ENCODE measurements at regions of chr7 and their contacts with region 1.

Region 1: GRCh38 chr7:39465055-39465929 is 100.9 kb upstream of the YAE1 start:
- DNase-seq: peak; percentile 53 to 64
- H3K4me3 ChIP-seq: no peak overlapping the region
- H3K4me3 Mint-ChIP-seq: peak overlapping the region; percentile 49
- H3K27ac Mint-ChIP-seq: peak overlapping the region; percentile 36
- H3K4me1 ChIP-seq: peaks cover 4% of the 10 kb centered on the region; the same call in 1 of the 2 replicates
- H3K4me1 Mint-ChIP-seq: peaks cover 9% of the 10 kb centered on the region
- H3K27me3 ChIP-seq: no peaks in the 10 kb centered on the region
- H3K27me3 Mint-ChIP-seq: peaks cover 7% of the 10 kb centered on the region
- CTCF ChIP-seq: peak; percentile 78 to 79

Region 2: GRCh38 chr7:39313974-39314373 is 151.3 kb before region 1 on chr7:
- CTCF ChIA-PET with region 1: no interaction called
- POLR2A ChIA-PET with region 1: no interaction called
- intact Hi-C with region 1: loop called (anchors 10 kb)
- DNase-seq: no peak
- H3K4me3 ChIP-seq: no peak overlapping the region
- H3K4me3 Mint-ChIP-seq: no peak overlapping the region
- H3K27ac Mint-ChIP-seq: no peak overlapping the region
- H3K4me1 ChIP-seq: no peaks in the 10 kb centered on the region
- H3K4me1 Mint-ChIP-seq: no peaks in the 10 kb centered on the region
- H3K27me3 ChIP-seq: peaks cover 1% of the 10 kb centered on the region; the same call in 1 of the 2 replicates
- H3K27me3 Mint-ChIP-seq: peaks cover 23% of the 10 kb centered on the region
- CTCF ChIP-seq: no peak

Region 3: DNA sequence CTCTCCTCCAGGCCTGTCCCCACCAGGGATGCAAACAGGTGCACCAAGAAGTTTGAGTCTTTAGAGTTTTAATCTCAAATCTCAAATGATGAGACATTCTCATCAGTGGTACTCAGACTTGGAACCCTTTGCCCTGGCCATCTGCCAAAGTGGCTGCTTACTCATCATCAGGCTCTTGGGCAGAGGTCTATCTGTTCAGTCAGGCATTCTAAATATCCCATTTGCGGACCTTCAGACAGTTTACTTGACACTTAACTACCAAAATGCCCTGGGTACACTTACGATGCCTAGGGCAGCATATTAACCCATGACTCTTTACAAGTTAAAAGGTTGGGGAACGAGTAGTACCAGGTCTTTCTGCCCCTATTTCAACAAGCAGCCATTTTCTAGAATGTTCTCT is 39.7 kb after region 1 on chr7:
- CTCF ChIA-PET with region 1: no interaction called
- POLR2A ChIA-PET with region 1: no interaction called
- intact Hi-C with region 1: no loop called
- DNase-seq: no peak
- H3K4me3 ChIP-seq: no peak overlapping the region
- H3K4me3 Mint-ChIP-seq: no peak overlapping the region
- H3K27ac Mint-ChIP-seq: no peak overlapping the region
- H3K4me1 ChIP-seq: no peaks in the 10 kb centered on the region
- H3K4me1 Mint-ChIP-seq: no peaks in the 10 kb centered on the region
- H3K27me3 ChIP-seq: no peaks in the 10 kb centered on the region; the same call in 1 of the 2 replicates
- H3K27me3 Mint-ChIP-seq: peaks cover 16% of the 10 kb centered on the region
- CTCF ChIP-seq: no peak

Region 4: DNA sequence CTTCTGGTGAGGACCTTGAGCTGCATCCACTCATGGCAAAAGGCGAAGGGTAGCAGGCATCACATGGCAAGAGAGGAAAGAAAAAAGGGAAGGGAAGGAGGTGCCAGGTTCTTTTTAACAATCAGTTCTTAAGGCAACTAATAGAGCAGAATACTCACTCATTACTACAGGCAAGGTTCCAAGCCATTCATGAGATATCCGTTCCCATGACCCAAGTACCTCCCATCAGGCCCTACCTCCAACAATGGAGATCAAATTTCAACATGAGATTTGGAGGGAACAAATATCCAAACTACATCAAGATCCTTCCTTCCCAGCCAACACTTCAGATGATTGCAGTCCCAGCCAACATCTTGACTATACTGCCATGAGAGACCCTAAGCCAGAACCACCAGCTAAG is 62.0 kb after region 1 on chr7:
- CTCF ChIA-PET with region 1: no interaction called
- POLR2A ChIA-PET with region 1: no interaction called
- intact Hi-C with region 1: loop called (anchors 5 kb)
- DNase-seq: no peak
- H3K4me3 ChIP-seq: no peak overlapping the region
- H3K4me3 Mint-ChIP-seq: no peak overlapping the region
- H3K27ac Mint-ChIP-seq: no peak overlapping the region
- H3K4me1 ChIP-seq: no peaks in the 10 kb centered on the region
- H3K4me1 Mint-ChIP-seq: no peaks in the 10 kb centered on the region
- H3K27me3 ChIP-seq: no peaks in the 10 kb centered on the region
- H3K27me3 Mint-ChIP-seq: peaks cover 6% of the 10 kb centered on the region
- CTCF ChIP-seq: no peak

Region 5: DNA sequence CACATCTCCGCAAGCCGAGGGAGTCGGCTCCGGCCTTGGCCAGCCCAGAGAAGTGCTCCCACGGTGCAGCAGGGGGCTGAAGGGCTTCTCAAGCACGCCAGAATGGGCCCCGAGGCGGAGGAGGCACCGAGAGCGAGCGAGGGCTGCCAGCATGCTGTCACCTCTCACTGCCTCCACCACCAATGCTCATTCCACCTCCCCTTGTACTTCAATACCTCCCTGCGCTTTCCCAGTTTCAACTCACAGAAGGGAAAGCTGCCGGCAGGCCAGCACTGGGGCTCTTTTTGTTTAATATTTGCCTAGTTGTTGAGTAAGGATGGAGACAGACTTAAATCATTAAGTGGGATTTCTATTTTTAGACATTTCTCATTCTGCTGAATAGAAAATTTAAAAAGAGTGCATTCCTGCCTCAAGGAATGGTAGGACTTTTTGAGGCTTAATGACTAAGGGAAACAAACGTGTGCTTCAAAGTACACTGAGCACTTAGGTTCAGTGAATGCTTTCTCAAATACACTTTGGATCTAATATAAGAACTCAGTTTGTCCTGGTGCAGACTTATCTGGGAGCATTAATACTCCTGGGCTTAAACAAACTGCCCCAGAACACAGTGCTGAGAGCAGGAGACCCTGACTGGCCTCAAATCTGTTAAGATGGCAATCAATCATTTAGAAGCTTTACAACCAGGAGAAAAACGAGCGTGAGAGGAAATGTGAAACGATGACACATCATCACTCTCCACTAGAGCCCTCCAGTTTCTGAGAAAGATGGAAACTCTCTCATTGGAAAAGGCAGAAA is 289.2 kb after region 1 on chr7:
- CTCF ChIA-PET with region 1: no interaction called
- POLR2A ChIA-PET with region 1: no interaction called
- intact Hi-C with region 1: no loop called
- DNase-seq: no peak
- H3K4me3 ChIP-seq: no peak overlapping the region
- H3K4me3 Mint-ChIP-seq: no peak overlapping the region
- H3K27ac Mint-ChIP-seq: no peak overlapping the region
- H3K4me1 ChIP-seq: peaks cover 13% of the 10 kb centered on the region
- H3K4me1 Mint-ChIP-seq: peaks cover 19% of the 10 kb centered on the region
- H3K27me3 ChIP-seq: no peaks in the 10 kb centered on the region
- H3K27me3 Mint-ChIP-seq: no peaks in the 10 kb centered on the region
- CTCF ChIP-seq: no peak